Common myeloid progenitor, CD34-positive (primary cell): ENCODE measurements at regions of chr1 and their contacts with region 1.

Region 1: DNA sequence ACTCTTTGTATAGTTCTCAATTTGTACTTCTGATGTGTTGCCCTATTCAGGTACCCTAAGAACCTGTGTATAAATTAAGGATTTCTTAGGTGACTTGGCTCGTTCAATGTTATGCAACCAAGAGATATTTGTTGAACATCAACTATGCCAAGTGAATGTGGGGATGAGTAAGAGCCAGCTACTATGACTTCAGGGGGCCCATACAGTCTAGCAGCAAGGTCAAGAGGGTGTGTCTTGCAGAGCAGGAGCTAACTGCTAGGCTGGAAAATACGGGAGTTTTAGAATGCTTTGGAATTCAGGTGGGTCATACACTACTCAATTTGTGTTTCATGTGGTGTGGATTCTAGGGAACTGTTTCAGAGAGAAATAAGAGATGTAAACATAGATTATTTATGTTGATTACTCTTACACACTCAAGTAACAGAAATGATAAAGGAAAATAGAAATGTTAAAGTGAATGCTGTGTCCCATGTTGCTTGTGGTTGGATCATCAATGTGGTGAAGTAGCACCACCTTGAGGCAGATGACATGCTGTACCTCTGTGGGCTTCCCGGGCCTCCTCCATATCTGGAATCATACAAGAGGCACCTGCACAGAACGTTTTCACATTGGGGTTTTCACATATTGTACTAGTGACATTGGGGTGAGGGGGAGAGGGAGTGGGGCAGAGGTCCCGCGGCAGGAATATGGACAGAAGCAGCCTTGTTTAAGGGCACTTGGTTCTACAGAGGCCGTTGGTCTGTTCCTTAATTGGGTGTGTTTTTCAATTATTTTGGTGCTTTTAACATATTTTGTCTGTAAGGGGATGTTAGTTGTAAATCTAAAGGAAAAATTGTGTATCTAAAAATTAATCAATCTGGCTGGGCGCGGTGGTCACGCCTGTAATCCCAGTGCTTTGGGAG is 12.4 kb downstream of the ARPC5 start:
- DNase-seq: peak; percentile 78 to 85 (median 83)
- H3K4me3 ChIP-seq: no peak overlapping the region
- H3K27ac ChIP-seq: no peak overlapping the region
- H3K4me1 ChIP-seq: peaks cover 2 to 15% (median 7%) of the 10 kb centered on the region in 4 experiments
- H3K27me3 ChIP-seq: no peaks in the 10 kb centered on the region

Region 2: DNA sequence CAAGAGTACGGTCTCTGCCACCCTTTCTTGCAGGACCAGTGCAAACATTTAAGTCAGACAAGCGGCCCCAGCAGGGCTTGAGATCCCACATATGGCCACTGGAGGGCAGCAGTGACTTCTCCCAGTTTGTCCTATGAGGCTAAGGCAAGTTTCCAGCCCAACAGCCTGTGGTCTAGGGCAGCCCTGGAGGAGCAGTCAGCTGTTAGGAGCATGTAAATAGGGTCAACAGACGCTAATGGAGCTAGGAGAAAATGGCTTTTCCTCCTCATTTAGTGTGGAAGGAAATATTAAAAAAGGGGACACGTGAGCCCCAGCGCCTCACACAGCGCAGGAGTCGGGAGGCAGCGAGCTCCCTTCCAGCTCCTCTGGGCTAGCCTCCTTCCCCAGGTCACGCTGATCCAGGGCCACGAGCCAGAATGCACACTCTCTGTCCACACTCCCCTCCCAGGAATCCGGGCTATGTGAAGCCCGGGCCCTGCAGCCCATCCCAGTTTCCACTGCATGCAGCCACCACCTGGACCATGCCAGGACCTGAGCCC is 341.5 kb before region 1 on chr1:
- CTCF ChIA-PET with region 1: interaction called, 11 read pairs
- POLR2A ChIA-PET with region 1: no interaction called
- DNase-seq: peak; percentile 73 to 86 (median 78)
- H3K4me3 ChIP-seq: no peak overlapping the region
- H3K27ac ChIP-seq: no peak overlapping the region
- H3K4me1 ChIP-seq: peaks cover 0 to 6% (median 3%) of the 10 kb centered on the region in 4 experiments
- H3K27me3 ChIP-seq: peaks cover 0 to 3% (median 0%) of the 10 kb centered on the region in 5 experiments